ENCODE measurements at regions of chr16 and their contacts with region 1.

Region 1: DNA sequence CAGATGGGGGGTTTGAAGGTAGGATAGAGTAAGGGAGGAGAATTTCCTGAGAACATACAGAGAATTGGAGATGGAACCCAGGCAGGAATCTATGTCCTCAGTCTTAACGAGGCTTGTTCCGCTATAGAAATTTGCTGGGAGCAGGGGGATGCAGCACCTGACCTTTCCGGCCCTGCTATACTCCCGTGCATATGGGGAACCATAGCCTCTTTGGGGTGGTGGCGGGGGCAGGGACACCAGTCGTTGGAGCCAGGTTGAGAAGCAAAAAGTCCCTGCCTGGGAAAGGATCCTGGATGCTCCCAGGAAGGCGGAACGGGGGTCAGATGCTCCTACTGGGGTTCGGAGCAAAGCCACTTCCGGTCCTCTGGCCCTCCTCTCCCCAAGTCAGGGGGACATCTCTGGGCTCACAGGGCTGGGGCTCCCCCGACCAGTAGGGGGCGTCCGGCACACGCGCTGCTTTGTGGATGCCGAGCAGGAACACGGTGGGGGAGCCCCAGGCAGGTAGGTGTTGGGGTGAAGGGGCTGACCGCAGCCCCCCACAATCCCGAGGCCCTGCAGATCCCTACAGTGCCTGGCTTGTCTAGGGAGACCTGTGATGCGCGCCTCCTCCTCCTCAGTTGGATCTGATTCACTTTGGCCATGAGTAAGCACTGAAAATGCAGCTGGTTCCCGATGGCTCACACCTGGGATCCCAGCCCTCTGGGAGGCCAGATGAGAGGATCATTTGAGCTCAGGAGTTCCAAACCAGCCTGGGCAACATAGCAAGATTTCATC is 15.5 kb upstream of the TFAP4 start:
- DNase-seq: peak; percentile 50 to 69 (median 66)
- H3K4me3 ChIP-seq: peak overlapping the region in 1 of 7 experiments; percentile 38
- H3K27ac ChIP-seq: no peak overlapping the region
- H3K4me1 ChIP-seq: peaks cover 0 to 10% (median 3%) of the 10 kb centered on the region in 4 experiments
- H3K27me3 ChIP-seq: peaks cover 0 to 4% (median 0%) of the 10 kb centered on the region in 5 experiments

Region 2: GRCh38 chr16:4298761-4299522 is 10.6 kb after region 1 on chr16:
- CTCF ChIA-PET with region 1: interaction called, 12 read pairs
- POLR2A ChIA-PET with region 1: no interaction called
- DNase-seq: no peak
- H3K4me3 ChIP-seq: no peak overlapping the region
- H3K27ac ChIP-seq: no peak overlapping the region
- H3K4me1 ChIP-seq: peaks cover 0 to 8% (median 6%) of the 10 kb centered on the region in 4 experiments
- H3K27me3 ChIP-seq: peaks cover 0 to 5% (median 0%) of the 10 kb centered on the region in 5 experiments

Region 3: DNA sequence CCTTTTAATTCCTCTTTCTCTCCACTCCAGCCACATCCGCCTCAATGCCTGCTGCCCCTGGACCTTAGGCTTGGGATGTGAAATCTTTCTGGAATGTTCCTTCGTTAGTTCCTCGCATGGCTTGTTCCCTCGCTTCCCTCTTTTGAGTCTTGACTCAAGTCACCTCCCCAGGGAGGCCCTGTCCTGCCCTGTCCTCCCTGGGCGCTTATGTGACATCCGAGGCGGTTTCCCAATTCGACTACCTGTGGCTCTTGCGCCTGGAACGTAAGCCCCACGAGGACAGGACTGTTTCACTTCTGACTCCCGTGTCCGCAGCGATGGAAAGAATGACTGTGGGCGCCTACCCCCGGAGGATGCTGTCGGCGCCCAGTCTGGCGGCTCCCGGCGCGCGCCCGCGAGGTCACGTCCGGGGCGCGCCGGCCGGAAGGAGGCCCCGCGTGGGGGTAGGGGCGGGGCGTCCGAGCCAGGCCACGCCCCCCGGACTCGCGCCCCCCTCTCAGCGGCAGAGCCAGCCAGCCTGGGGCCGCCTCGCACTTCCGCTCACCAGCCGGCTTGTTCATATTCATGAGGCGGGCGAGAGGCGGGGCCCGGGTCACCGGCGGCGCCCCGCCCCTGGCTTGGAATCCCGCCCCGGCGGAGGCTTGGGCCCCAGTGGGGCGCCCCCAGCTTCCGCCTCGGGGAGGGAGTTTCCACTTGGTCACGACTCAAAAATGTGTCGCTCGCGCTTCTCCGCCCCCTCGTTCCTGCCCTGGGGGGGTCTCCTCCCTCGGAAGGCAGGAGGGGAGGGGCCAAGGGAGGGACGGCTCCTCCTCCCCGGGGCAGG is 19.1 kb after region 1 on chr16:
- CTCF ChIA-PET with region 1: interaction called, 89 read pairs
- POLR2A ChIA-PET with region 1: no interaction called
- DNase-seq: peak; percentile 94 to 97 (median 97)
- H3K4me3 ChIP-seq: peak overlapping the region; percentile 56 to 81 (median 77)
- H3K27ac ChIP-seq: peak overlapping the region; percentile 33 to 75
- H3K4me1 ChIP-seq: peaks cover 5 to 24% (median 15%) of the 10 kb centered on the region in 4 experiments
- H3K27me3 ChIP-seq: no peaks in the 10 kb centered on the region

Measured in common myeloid progenitor, CD34-positive (primary cell).